GM12878 (cell line): ENCODE measurements at regions of chr17 and their contacts with region 1.

Region 1: DNA sequence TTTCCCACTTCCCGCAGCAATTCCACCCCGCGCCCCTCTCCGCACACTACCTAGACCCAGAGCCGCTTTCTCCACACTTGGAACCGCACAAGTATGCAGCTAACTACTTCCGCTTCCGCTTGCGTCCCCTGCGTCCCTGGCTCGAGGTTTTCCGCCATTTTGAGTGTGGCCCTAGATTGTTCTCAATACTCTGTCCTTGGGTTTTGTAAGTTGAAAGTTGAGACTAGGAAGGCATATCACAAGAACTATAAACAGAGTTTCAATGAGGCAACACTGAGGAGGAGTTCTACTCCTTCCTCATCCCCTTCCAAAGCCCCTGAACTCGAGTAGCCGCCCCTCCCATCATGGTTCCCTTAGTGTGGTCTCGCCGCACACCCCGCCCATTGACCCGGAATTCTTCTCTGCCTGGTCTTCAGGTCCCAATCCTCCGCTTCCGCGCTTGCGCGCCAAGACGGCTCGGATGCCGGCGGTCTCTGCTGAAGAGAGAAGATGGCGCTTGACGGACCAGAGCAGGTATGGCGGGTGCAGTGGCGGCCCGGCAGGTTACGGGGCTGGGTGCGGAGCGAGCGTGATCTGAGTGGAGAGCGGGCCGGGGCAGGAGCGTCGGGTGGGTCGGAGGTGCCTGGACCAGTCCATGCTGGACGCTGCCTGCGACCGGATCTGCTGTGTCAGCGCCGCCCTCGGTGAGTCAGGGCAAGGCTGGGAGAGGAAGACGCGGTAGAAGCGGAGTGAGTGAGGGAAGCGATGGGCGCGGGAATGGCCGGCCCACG is at the starts of genes FTSJ3 and PSMC5:
- DNase-seq: peak; percentile 84
- ATAC-seq: peak; percentile 95
- H3K4me3 ChIP-seq: peak within 1 kb of the TSS; percentile 83
- H3K27ac ChIP-seq: peak within 1 kb of the TSS; percentile 95
- H3K4me1 ChIP-seq: peaks cover 17% of the 10 kb centered on the region
- H3K27me3 ChIP-seq: no peaks in the 10 kb centered on the region
- CTCF ChIP-seq: peak; percentile 60 to 73 (median 61)
- EP300 ChIP-seq: no peak
- POLR2A ChIP-seq: peak; percentile 99
- RAD21 ChIP-seq: no peak
- polyA plus RNA-seq, gene FTSJ3: 17.2 to 34.2 TPM
- polyA plus RNA-seq, gene PSMC5: 115 to 266 TPM

Region 2: DNA sequence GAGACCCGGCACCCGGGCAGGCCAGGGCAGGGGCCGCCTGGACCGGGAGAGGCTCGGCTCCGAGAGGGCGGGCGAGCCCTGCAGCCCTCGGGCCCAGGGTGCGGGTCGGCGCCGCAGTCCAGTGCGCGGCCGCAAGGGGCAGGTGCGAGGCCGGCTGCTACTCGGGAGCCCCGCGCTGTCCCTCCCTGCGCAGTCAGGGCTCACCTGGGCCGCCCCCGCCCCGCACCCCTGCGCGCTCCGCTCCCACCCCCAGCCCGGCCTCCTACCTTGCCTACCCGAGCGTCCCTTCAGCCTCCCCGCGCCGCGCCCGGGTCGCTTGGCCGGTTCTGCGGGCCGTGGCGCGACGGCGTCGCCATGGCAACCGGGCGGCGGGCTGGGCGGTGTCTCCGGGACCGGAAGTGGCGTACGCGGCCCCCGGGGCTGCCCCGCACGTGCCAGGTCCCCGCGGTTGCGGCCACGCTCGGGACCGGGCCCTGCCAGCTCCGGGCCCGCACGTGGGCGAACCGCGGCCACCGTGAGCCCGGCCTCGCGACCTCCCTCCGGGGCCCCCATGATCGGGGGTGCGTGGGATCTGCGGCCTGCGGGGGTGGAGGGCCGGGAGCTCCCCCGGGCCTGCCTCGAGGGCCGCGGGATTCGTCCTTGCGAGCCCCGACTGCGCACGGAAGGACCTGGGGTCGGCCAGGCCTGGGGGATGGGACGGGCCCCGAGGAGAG is 381.1 kb before region 1 on chr17 and contains the start of gene CYB561:
- CTCF ChIA-PET with region 1: no interaction called
- POLR2A ChIA-PET with region 1: no interaction called
- RAD21 ChIA-PET with region 1: no interaction called
- SMC1A ChIA-PET with region 1: no interaction called
- in situ Hi-C with region 1: loop called (anchors 25 kb)
- intact Hi-C with region 1: no loop called
- DNase-seq: no peak
- ATAC-seq: peak; percentile 87
- H3K4me3 ChIP-seq: peak within 1 kb of the TSS; percentile 80
- H3K27ac ChIP-seq: peak within 1 kb of the TSS; percentile 64; the same call in 1 of the 2 replicates
- H3K4me1 ChIP-seq: peaks cover 14% of the 10 kb centered on the region
- H3K27me3 ChIP-seq: no peaks in the 10 kb centered on the region
- CTCF ChIP-seq: peak; percentile 24 to 50 (median 28); a peak in 2 of 6 replicates
- EP300 ChIP-seq: no peak
- POLR2A ChIP-seq: 0 out of 2 replicates have a peak, but pooled peaks have one; percentile 4
- RAD21 ChIP-seq: no peak
- polyA plus RNA-seq, gene CYB561: 0.52 to 0.93 TPM